ENCODE measurements at regions of chr1 and their contacts with region 1.

Region 1: GRCh38 chr1:111895469-111896082 is 93.9 kb downstream of the KCND3 start:
- DNase-seq: no peak
- H3K4me3 ChIP-seq: no peak overlapping the region
- H3K27ac ChIP-seq: no peak overlapping the region
- H3K4me1 ChIP-seq: no peaks in the 10 kb centered on the region
- H3K27me3 ChIP-seq: no peaks in the 10 kb centered on the region
- CTCF ChIP-seq: no peak

Region 2: DNA sequence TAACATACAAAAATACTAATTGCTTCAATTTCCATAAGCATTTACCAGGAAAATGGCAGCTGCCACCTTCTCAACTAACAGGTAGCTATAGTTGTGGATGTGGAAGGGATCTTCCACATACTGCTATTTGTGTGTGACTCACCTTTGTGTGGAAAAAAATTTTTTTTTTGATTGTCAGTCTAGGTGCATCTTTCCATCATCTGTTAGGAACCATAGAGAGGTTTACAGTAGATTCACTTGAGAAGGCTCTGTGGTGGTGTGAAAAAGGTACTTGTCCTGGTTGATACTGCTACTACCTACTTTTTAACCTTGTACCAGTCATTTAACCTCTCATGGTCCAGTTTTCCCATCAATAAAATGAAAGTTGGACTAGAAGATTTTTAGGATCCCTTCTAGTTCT is 127.0 kb before region 1 on chr1:
- intact Hi-C with region 1: no loop called
- DNase-seq: no peak
- H3K4me3 ChIP-seq: no peak overlapping the region
- H3K27ac ChIP-seq: no peak overlapping the region
- H3K4me1 ChIP-seq: no peaks in the 10 kb centered on the region
- H3K27me3 ChIP-seq: no peaks in the 10 kb centered on the region
- CTCF ChIP-seq: no peak

Region 3: GRCh38 chr1:111948209-111949171 is 52.9 kb after region 1 on chr1:
- intact Hi-C with region 1: no loop called
- DNase-seq: peak; percentile 20
- H3K4me3 ChIP-seq: no peak overlapping the region
- H3K27ac ChIP-seq: no peak overlapping the region
- H3K4me1 ChIP-seq: no peaks in the 10 kb centered on the region
- H3K27me3 ChIP-seq: no peaks in the 10 kb centered on the region
- CTCF ChIP-seq: no peak

Region 4: GRCh38 chr1:112344754-112345423 is 449.3 kb after region 1 on chr1:
- intact Hi-C with region 1: loop called (anchors 5 kb)
- DNase-seq: no peak
- H3K4me3 ChIP-seq: no peak overlapping the region
- H3K27ac ChIP-seq: no peak overlapping the region
- H3K4me1 ChIP-seq: no peaks in the 10 kb centered on the region
- H3K27me3 ChIP-seq: no peaks in the 10 kb centered on the region
- CTCF ChIP-seq: no peak

Measured in colonic mucosa (tissue), 4 donors.